ENCODE measurements at regions of chr12 and their contacts with region 1.

Region 1: GRCh38 chr12:92505254-92506231 is 197.2 kb upstream of the PLEKHG7 start:
- DNase-seq: peak; percentile 72
- ATAC-seq: peak; percentile 63
- H3K4me3 Mint-ChIP-seq: peak overlapping the region; percentile 73
- H3K27ac Mint-ChIP-seq: peak overlapping the region; percentile 97
- H3K4me1 Mint-ChIP-seq: peaks cover 53% of the 10 kb centered on the region
- H3K27me3 Mint-ChIP-seq: no peaks in the 10 kb centered on the region
- CTCF ChIP-seq: no peak

Region 2: DNA sequence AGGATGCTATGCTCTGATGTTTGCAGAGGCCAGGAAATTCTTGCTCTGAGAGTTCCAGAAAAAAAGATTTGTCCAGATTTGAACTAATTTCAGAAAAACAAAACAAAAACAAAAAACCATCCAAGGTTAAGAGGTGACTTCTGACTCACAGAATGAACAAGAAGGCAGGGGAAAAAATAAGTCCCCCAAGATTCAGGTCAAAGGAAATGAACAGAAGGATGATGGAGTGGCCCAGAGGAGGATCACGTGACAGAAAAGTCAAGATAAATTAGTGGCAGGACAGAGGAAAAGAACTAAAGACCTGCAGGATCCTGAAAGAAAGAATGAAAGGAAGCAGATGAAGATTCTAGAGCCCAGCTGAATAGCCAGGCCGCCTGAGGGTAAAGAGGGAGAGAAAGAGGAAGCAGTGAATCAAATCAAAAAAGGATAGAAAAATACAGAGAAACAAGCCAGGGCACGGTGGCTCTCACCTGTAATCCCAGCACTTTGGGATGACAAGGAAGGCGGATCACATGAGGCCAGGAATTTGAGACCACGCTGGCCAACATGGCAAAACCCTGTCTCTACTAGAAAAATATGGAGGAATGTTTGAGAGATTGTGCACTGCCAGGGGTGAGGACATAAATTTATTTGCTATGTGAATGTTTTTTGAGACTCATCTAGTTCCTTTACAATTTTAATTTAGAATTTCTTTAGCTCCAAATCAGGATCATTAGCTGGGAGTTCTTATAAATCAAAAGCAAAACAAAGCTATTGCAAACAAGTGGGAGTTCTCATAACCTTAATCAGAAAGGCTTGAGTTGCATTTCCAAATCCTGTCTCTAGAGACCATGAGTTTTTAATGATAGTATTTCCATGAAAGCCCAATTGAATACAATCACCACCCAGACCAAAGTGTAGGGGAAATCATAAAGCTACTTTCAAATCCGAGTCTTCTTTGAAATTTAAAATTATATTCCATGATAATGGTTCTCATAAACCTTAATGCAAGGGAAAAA is 19.9 kb before region 1 on chr12:
- CTCF ChIA-PET with region 1: interaction called, 14 read pairs
- POLR2A ChIA-PET with region 1: interaction called, 3 read pairs
- intact Hi-C with region 1: no loop called
- DNase-seq: no peak
- ATAC-seq: peak; percentile 42
- H3K4me3 Mint-ChIP-seq: no peak overlapping the region
- H3K27ac Mint-ChIP-seq: peak overlapping the region; percentile 83
- H3K4me1 Mint-ChIP-seq: peaks cover 32% of the 10 kb centered on the region
- H3K27me3 Mint-ChIP-seq: no peaks in the 10 kb centered on the region
- CTCF ChIP-seq: no peak

Region 3: DNA sequence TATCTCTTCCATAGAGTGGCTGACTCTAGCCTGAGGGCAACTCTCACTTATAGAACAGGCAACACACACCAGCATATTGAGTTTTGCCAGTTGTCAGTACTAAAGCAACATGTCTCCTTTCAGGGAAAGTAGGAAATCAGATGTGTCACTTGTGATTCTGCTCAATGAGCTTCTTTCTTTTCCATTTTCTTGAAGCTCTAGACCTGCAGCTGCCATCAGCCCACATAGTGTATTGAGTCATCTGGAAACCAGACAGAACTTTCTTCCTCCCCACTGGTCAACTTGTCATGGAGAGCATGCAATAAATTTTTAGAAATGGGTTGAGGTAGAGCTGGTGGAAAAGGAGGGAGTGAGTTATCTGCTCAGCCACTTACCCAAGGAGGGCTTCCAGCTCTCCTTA is 11.7 kb before region 1 on chr12:
- CTCF ChIA-PET with region 1: interaction called, 16 read pairs
- POLR2A ChIA-PET with region 1: interaction called, 13 read pairs
- intact Hi-C with region 1: no loop called
- DNase-seq: peak; percentile 35
- ATAC-seq: peak; percentile 80
- H3K4me3 Mint-ChIP-seq: no peak overlapping the region
- H3K27ac Mint-ChIP-seq: peak overlapping the region; percentile 60
- H3K4me1 Mint-ChIP-seq: peaks cover 40% of the 10 kb centered on the region
- H3K27me3 Mint-ChIP-seq: no peaks in the 10 kb centered on the region
- CTCF ChIP-seq: no peak

Region 4: GRCh38 chr12:92539113-92539749 is 33.7 kb after region 1 on chr12:
- CTCF ChIA-PET with region 1: interaction called, 6 read pairs
- POLR2A ChIA-PET with region 1: interaction called, 3 read pairs
- intact Hi-C with region 1: loop called (anchors 1 kb)
- DNase-seq: peak; percentile 68
- ATAC-seq: peak; percentile 80
- H3K4me3 Mint-ChIP-seq: no peak overlapping the region
- H3K27ac Mint-ChIP-seq: peak overlapping the region; percentile 94
- H3K4me1 Mint-ChIP-seq: peaks cover 59% of the 10 kb centered on the region
- H3K27me3 Mint-ChIP-seq: no peaks in the 10 kb centered on the region
- CTCF ChIP-seq: no peak

Region 5: DNA sequence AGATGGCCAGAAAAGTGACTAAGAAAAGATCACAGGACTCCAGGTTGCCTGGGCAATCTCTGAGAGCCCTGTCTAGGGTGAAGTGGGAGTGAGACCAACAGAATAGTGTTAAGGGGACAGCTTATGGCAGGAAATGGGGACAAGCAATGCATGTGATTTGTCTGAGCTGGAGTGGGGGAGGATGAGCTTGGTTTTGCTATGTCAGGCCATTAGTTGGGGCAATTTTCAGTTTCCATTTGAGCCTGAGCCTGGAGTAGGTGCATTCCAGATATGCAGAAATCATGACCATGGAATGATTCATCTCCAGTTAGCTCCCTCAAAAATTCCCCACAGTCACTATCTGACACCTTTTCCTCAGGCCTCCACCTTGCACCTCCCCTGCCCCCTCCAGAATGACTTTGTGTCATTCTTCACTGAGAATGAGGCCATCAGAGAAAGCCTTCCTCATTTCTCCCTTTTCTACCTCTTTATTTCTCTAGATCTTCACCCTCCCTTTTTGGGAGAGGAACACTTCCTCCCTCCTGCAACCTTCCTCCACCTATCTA is 46.4 kb after region 1 on chr12:
- CTCF ChIA-PET with region 1: interaction called, 10 read pairs
- POLR2A ChIA-PET with region 1: interaction called, 4 read pairs
- intact Hi-C with region 1: loop called (anchors 5 kb)
- DNase-seq: peak; percentile 77
- ATAC-seq: peak; percentile 86
- H3K4me3 Mint-ChIP-seq: no peak overlapping the region
- H3K27ac Mint-ChIP-seq: no peak overlapping the region
- H3K4me1 Mint-ChIP-seq: peaks cover 27% of the 10 kb centered on the region
- H3K27me3 Mint-ChIP-seq: no peaks in the 10 kb centered on the region
- CTCF ChIP-seq: no peak

Region 6: DNA sequence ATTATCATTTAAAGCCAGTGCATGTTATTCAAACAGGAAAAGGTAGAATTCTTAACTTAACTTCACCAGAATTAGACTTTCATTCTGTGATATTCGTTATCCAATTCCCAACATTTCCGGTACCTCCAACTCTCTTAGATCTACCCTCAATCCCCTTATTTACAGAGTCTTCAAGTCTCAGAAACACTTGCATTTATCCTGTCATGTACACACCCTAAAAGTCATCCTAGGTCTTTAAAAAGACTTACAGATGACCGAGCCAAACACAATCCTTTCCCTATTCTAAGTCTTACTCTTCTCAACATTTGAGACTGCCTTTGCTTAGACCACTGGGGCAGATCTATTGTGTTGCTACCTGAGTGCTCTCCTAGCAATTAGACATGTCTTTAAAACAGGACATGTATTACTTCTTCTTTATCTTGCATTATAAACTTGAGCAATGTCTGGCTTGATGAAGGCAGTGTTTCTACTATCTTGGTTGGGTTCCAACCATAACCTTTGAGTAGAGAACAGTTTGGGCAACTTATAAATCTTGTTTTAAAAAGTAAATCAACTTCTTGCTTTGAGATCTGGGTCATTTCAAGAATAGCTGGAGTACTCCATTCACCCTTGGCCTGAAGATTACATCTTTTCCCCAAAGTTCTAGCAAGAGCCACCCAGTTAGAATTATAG is 56.7 kb after region 1 on chr12:
- CTCF ChIA-PET with region 1: interaction called, 12 read pairs
- POLR2A ChIA-PET with region 1: interaction called, 5 read pairs
- intact Hi-C with region 1: no loop called
- DNase-seq: no peak
- ATAC-seq: no peak
- H3K4me3 Mint-ChIP-seq: no peak overlapping the region
- H3K27ac Mint-ChIP-seq: no peak overlapping the region
- H3K4me1 Mint-ChIP-seq: peaks cover 44% of the 10 kb centered on the region
- H3K27me3 Mint-ChIP-seq: no peaks in the 10 kb centered on the region
- CTCF ChIP-seq: no peak

Region 7: GRCh38 chr12:92570056-92570753 is 64.7 kb after region 1 on chr12:
- CTCF ChIA-PET with region 1: interaction called, 62 read pairs
- POLR2A ChIA-PET with region 1: interaction called, 7 read pairs
- intact Hi-C with region 1: no loop called
- DNase-seq: peak; percentile 66
- ATAC-seq: peak; percentile 89
- H3K4me3 Mint-ChIP-seq: no peak overlapping the region
- H3K27ac Mint-ChIP-seq: no peak overlapping the region
- H3K4me1 Mint-ChIP-seq: peaks cover 19% of the 10 kb centered on the region
- H3K27me3 Mint-ChIP-seq: no peaks in the 10 kb centered on the region
- CTCF ChIP-seq: peak; percentile 97

Region 8: DNA sequence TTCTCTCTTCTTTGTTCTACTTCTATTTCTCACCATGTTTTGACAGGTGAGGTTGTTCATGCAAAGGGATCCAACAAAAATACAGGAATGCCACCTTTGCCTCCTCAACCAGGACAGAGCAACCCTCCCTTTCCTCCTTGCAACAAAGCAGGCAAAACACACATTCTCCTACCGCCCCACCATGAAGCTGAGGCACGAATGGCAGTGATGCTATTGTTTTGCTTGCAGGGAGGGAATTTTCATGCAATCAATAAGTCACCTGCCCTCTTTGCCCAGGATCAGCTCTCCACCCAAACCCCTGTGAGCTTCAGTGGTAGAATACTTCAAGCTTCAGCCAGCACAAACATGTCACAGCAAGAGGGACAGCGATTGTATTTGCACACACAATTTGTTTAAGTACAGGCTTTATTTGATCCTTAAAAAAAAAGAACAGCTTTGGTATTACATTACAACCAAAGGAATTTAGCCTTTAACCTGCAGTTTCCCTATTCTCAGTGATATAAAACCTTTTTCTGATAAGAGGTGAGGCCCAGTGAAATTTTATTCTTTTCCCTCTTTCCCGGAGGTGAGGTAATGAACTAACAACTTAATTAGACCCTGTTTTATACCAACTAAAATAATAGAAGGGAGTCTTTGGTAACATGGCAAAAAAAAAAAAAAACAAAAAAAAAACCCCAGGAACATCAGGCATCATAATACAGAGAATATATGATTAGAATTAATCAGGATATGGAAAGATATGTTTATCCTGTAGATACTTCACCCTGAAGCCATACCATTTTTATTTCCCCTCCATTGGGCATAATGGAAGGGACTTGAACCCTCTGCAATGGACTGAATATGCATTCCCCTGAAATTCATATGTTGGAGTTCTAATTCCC is 510.6 kb after region 1 on chr12:
- CTCF ChIA-PET with region 1: no interaction called
- POLR2A ChIA-PET with region 1: no interaction called
- intact Hi-C with region 1: no loop called
- DNase-seq: no peak
- ATAC-seq: no peak
- H3K4me3 Mint-ChIP-seq: no peak overlapping the region
- H3K27ac Mint-ChIP-seq: no peak overlapping the region
- H3K4me1 Mint-ChIP-seq: no peaks in the 10 kb centered on the region
- H3K27me3 Mint-ChIP-seq: no peaks in the 10 kb centered on the region
- CTCF ChIP-seq: no peak